ENCODE measurements at regions of chr1 and their contacts with region 1.

Region 1: DNA sequence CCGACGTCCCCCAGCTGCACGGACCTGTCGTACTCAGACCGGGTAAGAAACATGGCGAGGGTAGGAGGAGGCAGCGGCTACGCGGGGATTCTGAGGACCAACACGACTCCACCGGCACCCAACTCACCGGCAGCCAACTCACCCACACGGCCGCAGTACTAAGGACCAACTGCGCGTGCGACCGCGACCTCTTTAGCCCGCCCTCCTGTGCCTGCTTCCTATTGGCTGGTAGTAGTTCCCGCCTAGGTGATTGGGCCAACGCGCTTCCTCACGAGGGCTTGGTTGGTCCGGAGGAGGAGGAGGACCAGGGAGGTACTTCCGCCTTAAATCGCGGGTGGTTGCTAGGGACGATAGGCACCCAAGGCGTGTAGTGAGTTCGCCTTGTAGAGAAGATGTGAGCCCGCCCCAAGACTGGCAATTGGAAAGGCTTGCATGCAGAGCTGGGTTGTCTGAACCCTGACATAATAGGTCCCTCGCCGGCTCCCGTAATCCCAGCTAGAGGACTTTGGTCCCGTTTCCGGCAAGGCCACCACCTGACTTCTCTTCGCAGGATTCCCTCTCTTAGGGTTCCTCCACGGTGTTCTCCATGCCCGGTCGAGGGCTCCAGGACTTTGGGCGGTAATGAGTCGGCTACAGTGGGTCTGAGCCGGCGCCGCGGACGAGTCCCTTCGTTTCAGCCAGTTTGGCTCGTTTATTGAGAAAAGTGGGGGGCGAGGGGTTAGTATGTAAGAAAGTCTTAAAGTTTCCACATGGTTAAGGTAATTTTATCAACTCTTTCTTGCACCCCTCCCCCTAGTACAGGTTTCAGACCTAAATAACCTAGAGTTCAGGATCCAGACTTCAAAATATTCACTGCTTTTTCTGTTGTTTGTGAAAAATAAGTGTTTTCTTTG is at the start of gene PSMA5:
- DNase-seq: peak; percentile 93 to 99 (median 96)
- H3K4me3 ChIP-seq: peak within 1 kb of the TSS; percentile 96 to 98
- H3K4me3 Mint-ChIP-seq: peak within 1 kb of the TSS; percentile 94 to 99 (median 98)
- H3K27ac ChIP-seq: peak within 1 kb of the TSS; percentile 87
- H3K27ac Mint-ChIP-seq: peak within 1 kb of the TSS; percentile 90 to 99 (median 98)
- H3K4me1 ChIP-seq: peaks cover 44% of the 10 kb centered on the region
- H3K4me1 Mint-ChIP-seq: peaks cover 22 to 50% (median 37%) of the 10 kb centered on the region in 4 donors
- H3K27me3 ChIP-seq: no peaks in the 10 kb centered on the region
- H3K27me3 Mint-ChIP-seq: no peaks in the 10 kb centered on the region
- total RNA-seq, gene PSMA5: 87.7 to 90.2 TPM

Region 2: DNA sequence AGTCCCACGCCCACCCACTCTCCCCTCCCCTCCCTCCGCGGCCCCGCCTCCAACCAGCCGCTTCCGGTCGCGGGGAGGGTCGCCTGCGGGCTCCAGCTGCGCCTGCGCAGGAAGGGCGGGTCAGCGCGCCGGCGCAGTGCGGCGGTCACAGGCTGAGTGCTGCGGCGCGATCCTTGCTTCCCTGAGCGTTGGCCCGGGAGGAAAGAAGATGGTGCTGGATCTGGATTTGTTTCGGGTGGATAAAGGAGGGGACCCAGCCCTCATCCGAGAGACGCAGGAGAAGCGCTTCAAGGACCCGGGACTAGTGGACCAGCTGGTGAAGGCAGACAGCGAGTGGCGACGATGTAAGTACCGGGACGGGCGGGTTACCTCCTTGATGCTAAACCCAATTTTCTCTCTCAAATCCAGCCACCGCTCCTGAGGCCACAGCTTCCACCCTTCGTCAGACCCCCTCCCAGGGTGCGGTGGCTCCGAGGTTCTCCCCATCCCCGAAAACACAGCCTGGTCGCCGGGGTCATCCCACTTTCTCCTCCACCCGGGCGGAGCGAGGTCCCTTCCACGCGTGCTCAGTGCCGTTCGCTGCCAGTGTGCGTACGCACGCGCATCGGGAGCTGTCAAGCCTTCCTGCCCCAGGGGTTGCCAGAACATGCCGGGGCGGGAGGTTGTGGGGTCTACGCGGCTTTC is 212.6 kb before region 1 on chr1 and contains the start of gene SARS1:
- CTCF ChIA-PET with region 1: no interaction called
- POLR2A ChIA-PET with region 1: interaction called, 13 read pairs
- intact Hi-C with region 1: loop called (anchors 1 kb)
- DNase-seq: peak; percentile 81 to 93 (median 88)
- H3K4me3 ChIP-seq: peak within 1 kb of the TSS; percentile 71 to 94
- H3K4me3 Mint-ChIP-seq: peak within 1 kb of the TSS; percentile 95 to 100 (median 98)
- H3K27ac ChIP-seq: peak within 1 kb of the TSS; percentile 78
- H3K27ac Mint-ChIP-seq: peak within 1 kb of the TSS; percentile 93 to 99 (median 96)
- H3K4me1 ChIP-seq: peaks cover 37% of the 10 kb centered on the region
- H3K4me1 Mint-ChIP-seq: peaks cover 24 to 45% (median 38%) of the 10 kb centered on the region in 4 donors
- H3K27me3 ChIP-seq: no peaks in the 10 kb centered on the region
- H3K27me3 Mint-ChIP-seq: no peaks in the 10 kb centered on the region
- total RNA-seq, gene SARS1: 178 to 190 TPM

Region 3: DNA sequence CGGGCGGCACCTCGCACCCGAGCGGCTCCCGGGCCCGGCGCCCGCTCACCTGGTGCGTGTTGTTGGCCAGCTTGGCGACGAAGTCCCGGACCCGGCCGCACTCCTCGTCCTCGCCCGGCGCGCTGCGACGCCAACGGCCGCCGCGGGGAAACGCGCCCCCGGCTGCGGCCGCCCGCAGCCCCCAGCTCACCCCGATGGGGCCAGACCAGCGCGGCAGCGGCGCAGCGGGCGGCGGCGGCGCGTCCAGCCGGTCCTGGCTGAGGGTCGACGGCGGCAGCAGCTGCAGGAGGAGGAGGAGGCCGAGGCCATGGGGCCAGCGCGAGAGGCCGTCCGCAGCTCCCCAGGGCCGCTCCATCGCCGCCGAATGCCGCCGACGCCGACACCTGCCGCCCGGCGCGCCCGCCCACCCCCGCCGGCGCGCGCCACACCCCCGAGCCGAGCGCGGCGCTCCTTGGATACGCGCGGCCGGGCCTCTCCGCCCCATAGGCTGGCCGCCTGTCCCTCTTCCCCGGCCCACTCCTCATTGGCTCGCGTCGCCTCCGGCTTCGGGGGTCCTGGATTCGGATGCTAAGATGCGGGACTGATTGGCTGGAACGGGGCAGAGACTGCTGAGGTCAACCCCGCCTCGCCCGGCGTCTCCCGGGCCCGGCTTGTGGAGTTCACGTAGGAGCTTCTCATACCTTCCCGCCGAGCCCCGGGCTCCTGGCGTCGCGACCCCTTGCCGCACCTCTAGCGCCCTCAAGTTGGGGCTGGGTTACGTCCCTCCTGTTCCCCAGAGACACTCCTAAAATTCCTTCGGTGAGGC is 28.8 kb before region 1 on chr1 and contains the start of gene SORT1:
- CTCF ChIA-PET with region 1: interaction called, 10 read pairs
- POLR2A ChIA-PET with region 1: interaction called, 15 read pairs
- intact Hi-C with region 1: no loop called
- DNase-seq: peak; percentile 35 to 50 (median 40)
- H3K4me3 ChIP-seq: no peak within 1 kb of the TSS
- H3K4me3 Mint-ChIP-seq: peak within 1 kb of the TSS; percentile 70 to 86 (median 84)
- H3K27ac ChIP-seq: no peak within 1 kb of the TSS
- H3K27ac Mint-ChIP-seq: peak within 1 kb of the TSS in 2 of 7 donors; percentile 29 to 53
- H3K4me1 ChIP-seq: peaks cover 14% of the 10 kb centered on the region
- H3K4me1 Mint-ChIP-seq: peaks cover 5 to 15% (median 9%) of the 10 kb centered on the region in 4 donors
- H3K27me3 ChIP-seq: peaks cover 37% of the 10 kb centered on the region
- H3K27me3 Mint-ChIP-seq: peaks cover 30 to 31% of the 10 kb centered on the region in 2 donors
- total RNA-seq, gene SORT1: 0.69 to 0.93 TPM

Region 4: GRCh38 chr1:109493805-109494539 is 67.4 kb after region 1 on chr1 and contains the start of gene CYB561D1:
- CTCF ChIA-PET with region 1: interaction called, 7 read pairs
- POLR2A ChIA-PET with region 1: interaction called, 12 read pairs
- intact Hi-C with region 1: no loop called
- DNase-seq: peak; percentile 87 to 95 (median 89)
- H3K4me3 ChIP-seq: peak within 1 kb of the TSS; percentile 91 to 97
- H3K4me3 Mint-ChIP-seq: peak within 1 kb of the TSS; percentile 94 to 97 (median 96)
- H3K27ac ChIP-seq: peak within 1 kb of the TSS; percentile 53
- H3K27ac Mint-ChIP-seq: peak within 1 kb of the TSS; percentile 86 to 95 (median 93)
- H3K4me1 ChIP-seq: peaks cover 57% of the 10 kb centered on the region
- H3K4me1 Mint-ChIP-seq: peaks cover 30 to 60% (median 46%) of the 10 kb centered on the region in 4 donors
- H3K27me3 ChIP-seq: no peaks in the 10 kb centered on the region
- H3K27me3 Mint-ChIP-seq: no peaks in the 10 kb centered on the region
- total RNA-seq, gene CYB561D1: 40.7 to 41.6 TPM

Region 5: GRCh38 chr1:109532365-109533136 is 106.0 kb after region 1 on chr1:
- CTCF ChIA-PET with region 1: interaction called, 13 read pairs
- POLR2A ChIA-PET with region 1: interaction called, 16 read pairs
- intact Hi-C with region 1: loop called (anchors 1 kb)
- DNase-seq: peak; percentile 84 to 90 (median 86)
- H3K4me3 ChIP-seq: peak overlapping the region; percentile 55 to 71
- H3K4me3 Mint-ChIP-seq: peak overlapping the region; percentile 77 to 91 (median 86)
- H3K27ac ChIP-seq: peak overlapping the region; percentile 29
- H3K27ac Mint-ChIP-seq: peak overlapping the region; percentile 61 to 96 (median 89)
- H3K4me1 ChIP-seq: peaks cover 25% of the 10 kb centered on the region
- H3K4me1 Mint-ChIP-seq: peaks cover 15 to 37% (median 25%) of the 10 kb centered on the region in 4 donors
- H3K27me3 ChIP-seq: no peaks in the 10 kb centered on the region
- H3K27me3 Mint-ChIP-seq: peaks cover 0 to 2% of the 10 kb centered on the region in 2 donors

Measured in CD4-positive, alpha-beta memory T cell (primary cell).